Activated CD4-positive, alpha-beta T cell treated with anti-CD3 and anti-CD28 coated beads, Interleukin-2, amount 10 ng/mL, durations not matched to agents 24 days and 14 days (primary cell): ENCODE measurements at regions of chr1 and their contacts with region 1.

Region 1: DNA sequence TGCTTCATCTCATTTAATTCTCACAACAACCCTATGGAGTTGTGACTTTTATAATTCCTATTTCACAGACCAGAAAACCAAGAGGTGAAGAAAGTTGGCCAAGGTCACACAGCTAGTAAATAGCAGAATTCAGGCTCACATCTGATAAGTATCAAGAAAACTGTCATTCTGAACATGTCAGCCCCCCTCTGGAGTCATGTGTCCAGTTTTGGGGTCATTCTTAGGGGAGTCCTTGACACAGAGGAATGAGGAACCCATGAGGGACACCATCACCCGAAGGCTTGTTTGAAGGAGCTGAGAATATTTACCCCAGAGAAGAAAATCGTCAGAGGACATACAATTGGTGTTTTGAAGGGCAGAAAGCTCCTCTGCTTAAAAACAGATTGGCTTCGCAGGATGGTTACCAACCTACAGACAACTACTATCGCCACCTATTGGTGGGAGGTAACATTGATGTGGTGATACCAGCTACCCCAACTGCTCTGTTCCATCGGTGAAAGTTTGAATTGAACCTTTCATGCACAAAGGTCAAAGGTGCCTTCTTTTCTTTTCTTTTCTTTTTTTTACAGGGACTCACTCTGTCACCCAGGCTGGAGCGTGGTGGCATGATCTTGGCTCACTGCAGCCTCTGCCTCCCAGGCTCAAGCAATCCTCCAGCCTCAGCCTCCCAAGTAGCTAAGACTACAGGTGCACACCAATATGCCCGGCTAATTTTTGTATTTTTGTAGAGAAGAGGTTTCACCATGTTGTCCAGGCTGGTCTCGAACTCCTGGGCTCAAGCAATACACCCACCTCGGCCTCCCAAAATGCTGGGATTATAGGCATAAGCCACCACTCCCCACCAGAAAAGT is 31.3 kb downstream of the NCMAP start:
- DNase-seq: peak; percentile 89
- H3K4me3 Mint-ChIP-seq: no peak overlapping the region
- H3K27ac Mint-ChIP-seq: no peak overlapping the region
- H3K4me1 Mint-ChIP-seq: peaks cover 8% of the 10 kb centered on the region
- H3K27me3 Mint-ChIP-seq: peaks cover 12% of the 10 kb centered on the region

Region 2: GRCh38 chr1:24415334-24415909 is 171.8 kb before region 1 on chr1 and contains the start of gene NIPAL3:
- intact Hi-C with region 1: loop called (anchors 5 kb)
- DNase-seq: peak; percentile 99
- H3K4me3 Mint-ChIP-seq: peak within 1 kb of the TSS; percentile 88
- H3K27ac Mint-ChIP-seq: peak within 1 kb of the TSS; percentile 90
- H3K4me1 Mint-ChIP-seq: peaks cover 53% of the 10 kb centered on the region
- H3K27me3 Mint-ChIP-seq: no peaks in the 10 kb centered on the region
- total RNA-seq, gene NIPAL3: 25.1 and 26.3 TPM in 2 replicates

Region 3: GRCh38 chr1:24541711-24542346 is 45.4 kb before region 1 on chr1:
- intact Hi-C with region 1: loop called (anchors 2 kb)
- DNase-seq: peak; percentile 76
- H3K4me3 Mint-ChIP-seq: peak overlapping the region; percentile 34
- H3K27ac Mint-ChIP-seq: peak overlapping the region; percentile 28
- H3K4me1 Mint-ChIP-seq: peaks cover 43% of the 10 kb centered on the region
- H3K27me3 Mint-ChIP-seq: no peaks in the 10 kb centered on the region

Region 4: DNA sequence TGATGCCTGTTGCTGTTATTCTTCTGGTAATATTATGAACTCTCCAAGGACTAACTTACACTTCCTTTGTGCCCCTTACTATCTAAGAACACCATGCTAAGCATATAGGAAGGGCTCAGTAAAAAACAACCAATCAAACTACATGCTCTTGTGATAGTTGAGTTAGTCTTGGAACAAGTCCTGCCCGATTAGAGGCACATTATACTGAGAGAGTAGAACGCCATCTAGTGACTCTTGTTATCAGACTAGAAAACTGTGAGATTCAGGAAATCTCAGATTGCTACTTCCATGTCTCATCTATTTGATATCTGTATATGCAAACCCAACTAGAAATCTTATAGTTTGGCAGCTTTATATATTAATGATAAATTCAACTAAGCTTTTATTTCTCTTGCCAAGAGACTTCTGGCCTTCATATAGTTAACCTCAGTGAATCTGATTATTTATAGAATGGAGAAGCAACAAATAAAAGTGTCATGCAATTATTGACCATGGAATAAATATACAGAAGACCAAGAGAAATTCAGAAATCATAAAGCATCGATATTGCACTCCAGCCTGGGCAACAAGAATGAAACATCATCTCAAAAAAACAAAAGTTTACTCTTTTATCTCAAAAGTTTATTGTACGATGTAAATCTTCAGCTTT is 48.1 kb after region 1 on chr1:
- intact Hi-C with region 1: loop called (anchors 5 kb)
- DNase-seq: peak; percentile 69
- H3K4me3 Mint-ChIP-seq: no peak overlapping the region
- H3K27ac Mint-ChIP-seq: no peak overlapping the region
- H3K4me1 Mint-ChIP-seq: peaks cover 7% of the 10 kb centered on the region
- H3K27me3 Mint-ChIP-seq: peaks cover 15% of the 10 kb centered on the region